HepG2 (cell line): ENCODE measurements at regions of chr10 and their contacts with region 1.

Region 1: GRCh38 chr10:62244780-62245467 is 23.7 kb downstream of the RTKN2 start:
- DNase-seq: peak; percentile 67
- ATAC-seq: peak; percentile 64
- H3K4me3 ChIP-seq: no peak overlapping the region
- H3K27ac ChIP-seq: no peak overlapping the region
- H3K4me1 ChIP-seq: peaks cover 12% of the 10 kb centered on the region
- H3K27me3 ChIP-seq: no peaks in the 10 kb centered on the region
- CTCF ChIP-seq: peak; percentile 84
- EP300 ChIP-seq: no peak; a peak in 1 of 4 replicates
- POLR2A ChIP-seq: no peak
- RAD21 ChIP-seq: peak; percentile 60; the same call in 1 of the 2 replicates

Region 2: DNA sequence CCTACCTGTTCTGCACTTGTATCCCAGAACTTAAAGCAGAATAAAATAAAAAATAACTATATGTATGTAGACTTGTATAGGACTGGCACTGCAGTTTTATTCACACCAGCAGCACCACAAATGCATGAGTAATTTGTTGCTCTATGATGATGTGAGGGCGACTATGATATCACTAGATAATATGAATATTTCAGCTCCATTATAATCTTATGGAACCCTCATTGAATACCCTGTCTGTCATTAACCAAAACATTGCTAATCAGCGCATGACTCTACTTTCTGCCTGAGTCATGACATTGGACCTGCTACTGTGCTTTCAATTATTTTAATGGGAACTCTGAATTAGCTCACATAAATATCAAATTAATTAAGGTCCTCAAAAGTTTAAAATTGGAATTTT is 1171.5 kb before region 1 on chr10:
- CTCF ChIA-PET with region 1: no interaction called
- POLR2A ChIA-PET with region 1: no interaction called
- in situ Hi-C with region 1: no loop called
- intact Hi-C with region 1: loop called (anchors 5 kb)
- DNase-seq: no peak
- ATAC-seq: no peak
- H3K4me3 ChIP-seq: no peak overlapping the region
- H3K27ac ChIP-seq: no peak overlapping the region
- H3K4me1 ChIP-seq: peaks cover 47% of the 10 kb centered on the region
- H3K27me3 ChIP-seq: no peaks in the 10 kb centered on the region
- CTCF ChIP-seq: no peak
- EP300 ChIP-seq: no peak
- POLR2A ChIP-seq: no peak
- RAD21 ChIP-seq: no peak

Region 3: DNA sequence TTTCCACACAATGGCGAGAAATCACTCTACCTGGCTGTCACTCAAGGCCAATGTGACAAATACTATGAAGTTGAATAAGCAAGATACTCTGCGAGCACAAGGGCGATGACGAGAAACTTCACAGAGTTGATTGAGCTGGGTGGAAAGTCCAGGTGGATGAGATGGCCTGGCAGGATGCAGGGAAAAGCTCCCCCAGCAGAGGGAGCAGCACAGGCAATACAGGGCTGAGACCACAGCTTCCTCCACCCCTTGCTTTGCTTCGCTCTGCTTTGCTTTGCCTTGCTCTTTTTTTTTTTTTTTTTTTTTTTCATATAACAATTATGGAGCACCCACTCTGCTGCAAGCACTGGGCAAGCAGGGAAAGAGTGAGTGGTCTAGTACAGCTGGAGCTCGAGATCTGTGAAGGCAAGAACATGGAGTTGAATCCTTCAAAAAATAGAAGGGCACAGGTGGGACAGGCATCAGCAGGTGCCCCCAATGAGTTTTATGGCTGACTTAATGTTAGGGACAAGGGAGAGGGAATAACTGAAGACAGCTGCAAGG is 493.9 kb before region 1 on chr10:
- CTCF ChIA-PET with region 1: no interaction called
- POLR2A ChIA-PET with region 1: no interaction called
- in situ Hi-C with region 1: no loop called
- intact Hi-C with region 1: loop called (anchors 1 kb)
- DNase-seq: peak; percentile 74
- ATAC-seq: peak; percentile 99
- H3K4me3 ChIP-seq: peak overlapping the region in 1 of 3 experiments; percentile 34; a peak in 1 of 6 replicates
- H3K27ac ChIP-seq: no peak overlapping the region
- H3K4me1 ChIP-seq: peaks cover 48% of the 10 kb centered on the region
- H3K27me3 ChIP-seq: no peaks in the 10 kb centered on the region
- CTCF ChIP-seq: peak; percentile 89
- EP300 ChIP-seq: no peak
- POLR2A ChIP-seq: no peak
- RAD21 ChIP-seq: peak; percentile 56; the same call in 1 of the 2 replicates

Region 4: DNA sequence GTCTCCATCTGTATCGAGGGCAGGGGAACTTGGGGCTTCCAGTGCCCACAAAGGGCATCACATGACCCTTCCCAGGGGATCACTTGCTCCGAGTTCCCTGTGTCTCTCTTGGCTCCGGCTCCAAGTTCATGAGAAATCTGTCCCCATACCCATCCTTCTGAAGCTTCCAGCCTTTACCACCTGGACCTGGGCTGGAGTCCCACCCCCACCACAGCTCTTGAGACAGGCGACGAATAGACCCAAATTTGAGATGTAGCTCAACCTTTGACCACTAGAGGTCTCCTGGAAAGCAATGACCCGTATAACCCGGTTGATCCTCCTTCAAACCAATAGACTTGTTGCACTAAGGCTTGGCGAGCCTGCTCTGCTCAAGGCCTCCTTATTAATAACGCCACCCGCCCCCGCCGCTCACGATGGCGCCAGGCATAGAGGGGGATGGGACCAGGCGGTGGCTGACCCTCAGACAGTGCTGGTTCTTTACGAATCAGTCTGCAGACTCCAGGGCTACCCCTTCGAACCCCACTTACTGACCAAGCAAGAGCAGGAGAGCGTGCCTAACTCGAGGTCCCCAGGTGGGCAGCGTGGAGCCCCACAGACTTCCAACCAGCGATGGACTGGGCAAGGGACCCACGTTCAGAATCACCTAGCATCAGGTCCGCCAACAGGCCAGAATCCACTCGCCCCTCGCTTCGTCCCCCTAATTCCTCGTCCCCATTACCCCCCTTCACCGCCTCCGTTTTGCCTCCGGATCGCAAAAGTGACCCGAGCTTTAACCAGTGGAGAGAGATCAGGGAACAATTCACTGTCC is 347.9 kb before region 1 on chr10:
- CTCF ChIA-PET with region 1: interaction called, 3 read pairs
- POLR2A ChIA-PET with region 1: no interaction called
- in situ Hi-C with region 1: loop called (anchors 10 kb)
- intact Hi-C with region 1: loop called (anchors 2 kb)
- DNase-seq: peak; percentile 74
- ATAC-seq: peak; percentile 92
- H3K4me3 ChIP-seq: no peak overlapping the region
- H3K27ac ChIP-seq: no peak overlapping the region
- H3K4me1 ChIP-seq: peaks cover 52% of the 10 kb centered on the region
- H3K27me3 ChIP-seq: no peaks in the 10 kb centered on the region; a peak in 1 of 5 replicates
- CTCF ChIP-seq: peak; percentile 80
- EP300 ChIP-seq: no peak
- POLR2A ChIP-seq: no peak
- RAD21 ChIP-seq: peak; percentile 59; the same call in 1 of the 2 replicates